ENCODE measurements at regions of chr11 and their contacts with region 1.

Region 1: DNA sequence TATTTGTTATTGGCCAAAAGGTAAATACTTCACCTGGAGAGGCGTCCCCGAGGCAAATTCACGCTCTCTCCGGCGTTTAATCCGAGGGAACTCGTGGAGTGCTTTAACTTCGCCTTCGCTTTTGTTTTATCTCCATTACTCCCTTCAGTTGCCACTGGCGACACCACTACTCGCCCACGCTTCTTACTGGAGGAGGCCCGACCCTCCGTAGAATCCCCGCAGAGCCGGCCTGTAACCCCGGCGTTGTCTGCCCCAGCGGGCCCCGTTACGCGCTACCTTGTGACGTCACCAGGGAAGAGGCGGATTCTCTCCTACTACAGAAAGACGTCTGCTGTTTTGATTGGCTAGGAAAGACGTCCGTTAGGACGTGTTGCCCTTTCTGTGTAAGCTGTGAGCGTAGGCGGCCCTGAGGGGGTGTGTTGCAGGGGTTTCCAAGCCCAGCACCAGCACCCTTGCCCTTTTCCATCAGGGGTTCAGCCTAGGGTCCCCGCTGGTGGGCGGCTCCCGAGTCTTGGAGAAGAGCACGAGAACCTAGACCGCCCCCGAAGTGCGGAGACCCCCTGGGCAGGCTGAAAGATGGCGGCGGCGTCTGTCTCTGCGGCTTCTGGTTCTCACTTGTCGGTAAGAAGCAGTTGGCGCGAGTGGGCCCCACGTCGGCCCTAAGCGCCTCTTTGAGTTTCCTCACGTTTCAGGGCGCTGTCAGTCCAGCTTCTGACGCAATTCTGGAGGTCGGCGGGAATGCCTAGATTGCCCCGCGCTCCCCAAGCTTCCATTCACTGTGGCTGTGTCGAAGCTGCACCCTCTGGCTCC is at the start of gene CEP57:
- DNase-seq: peak; percentile 95
- ATAC-seq: peak; percentile 89
- H3K4me3 ChIP-seq: peak within 1 kb of the TSS; percentile 90 to 99
- H3K27ac ChIP-seq: peak within 1 kb of the TSS; percentile 97
- H3K4me1 ChIP-seq: peaks cover 27% of the 10 kb centered on the region
- H3K27me3 ChIP-seq: no peaks in the 10 kb centered on the region
- CTCF ChIP-seq: no peak
- total RNA-seq, gene CEP57: 50.3 TPM

Region 2: GRCh38 chr11:94543695-94544645 is 1246.4 kb before region 1 on chr11 and contains the start of gene FUT4:
- CTCF ChIA-PET with region 1: no interaction called
- POLR2A ChIA-PET with region 1: no interaction called
- in situ Hi-C with region 1: no loop called
- intact Hi-C with region 1: loop called (anchors 10 kb)
- DNase-seq: no peak
- ATAC-seq: peak; percentile 95
- H3K4me3 ChIP-seq: peak within 1 kb of the TSS; percentile 66 to 83
- H3K27ac ChIP-seq: peak within 1 kb of the TSS; percentile 95
- H3K4me1 ChIP-seq: peaks cover 27% of the 10 kb centered on the region
- H3K27me3 ChIP-seq: no peaks in the 10 kb centered on the region
- CTCF ChIP-seq: no peak
- total RNA-seq, gene FUT4: 11.2 TPM

Region 3: GRCh38 chr11:95727620-95728019 is 62.7 kb before region 1 on chr11:
- CTCF ChIA-PET with region 1: no interaction called
- POLR2A ChIA-PET with region 1: no interaction called
- in situ Hi-C with region 1: no loop called
- intact Hi-C with region 1: no loop called
- DNase-seq: no peak
- ATAC-seq: no peak
- H3K4me3 ChIP-seq: no peak overlapping the region
- H3K27ac ChIP-seq: no peak overlapping the region
- H3K4me1 ChIP-seq: no peaks in the 10 kb centered on the region
- H3K27me3 ChIP-seq: peaks cover 13% of the 10 kb centered on the region; the same call in 1 of the 2 replicates
- CTCF ChIP-seq: no peak

Region 4: GRCh38 chr11:95767498-95767897 is 22.8 kb before region 1 on chr11:
- CTCF ChIA-PET with region 1: no interaction called
- POLR2A ChIA-PET with region 1: no interaction called
- in situ Hi-C with region 1: no loop called
- intact Hi-C with region 1: no loop called
- DNase-seq: no peak
- ATAC-seq: no peak
- H3K4me3 ChIP-seq: no peak overlapping the region
- H3K27ac ChIP-seq: no peak overlapping the region
- H3K4me1 ChIP-seq: no peaks in the 10 kb centered on the region
- H3K27me3 ChIP-seq: no peaks in the 10 kb centered on the region
- CTCF ChIP-seq: no peak

Region 5: DNA sequence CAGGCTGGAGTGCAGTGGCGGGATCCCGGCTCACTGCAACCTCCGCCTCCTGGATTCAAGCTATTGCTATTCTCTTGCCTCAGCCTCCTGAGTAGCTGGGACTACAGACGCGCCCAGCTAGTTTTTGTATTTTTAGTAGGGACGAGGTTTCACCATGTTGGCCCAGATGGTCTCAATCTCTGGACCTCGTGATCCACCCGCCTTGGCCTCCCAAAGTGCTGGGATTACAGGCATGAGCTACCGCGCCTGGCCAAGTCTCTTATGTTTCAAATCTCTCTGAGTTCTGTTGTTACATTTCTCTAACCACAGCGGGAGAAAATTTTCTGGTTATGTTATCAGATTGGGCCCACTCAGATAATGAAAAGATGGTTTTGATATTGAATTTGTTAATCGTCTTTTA is 10.1 kb after region 1 on chr11:
- CTCF ChIA-PET with region 1: no interaction called
- POLR2A ChIA-PET with region 1: no interaction called
- in situ Hi-C with region 1: no loop called
- intact Hi-C with region 1: no loop called
- DNase-seq: no peak
- ATAC-seq: no peak
- H3K4me3 ChIP-seq: no peak overlapping the region
- H3K27ac ChIP-seq: no peak overlapping the region
- H3K4me1 ChIP-seq: peaks cover 2% of the 10 kb centered on the region; the same call in 1 of the 2 replicates
- H3K27me3 ChIP-seq: no peaks in the 10 kb centered on the region
- CTCF ChIP-seq: no peak

Region 6: GRCh38 chr11:95891423-95892177 is 101.3 kb after region 1 on chr11:
- CTCF ChIA-PET with region 1: no interaction called
- POLR2A ChIA-PET with region 1: no interaction called
- in situ Hi-C with region 1: no loop called
- intact Hi-C with region 1: no loop called
- DNase-seq: no peak
- ATAC-seq: peak; percentile 66
- H3K4me3 ChIP-seq: no peak overlapping the region
- H3K27ac ChIP-seq: no peak overlapping the region
- H3K4me1 ChIP-seq: no peaks in the 10 kb centered on the region
- H3K27me3 ChIP-seq: no peaks in the 10 kb centered on the region
- CTCF ChIP-seq: no peak

Measured in Panc1 (cell line).